ENCODE measurements at regions of chr1 and their contacts with region 1.

Region 1: GRCh38 chr1:9455487-9456234 is 83.6 kb upstream of the SLC25A33 start:
- DNase-seq: peak; percentile 76
- H3K4me3 Mint-ChIP-seq: no peak overlapping the region
- H3K27ac Mint-ChIP-seq: no peak overlapping the region
- H3K4me1 Mint-ChIP-seq: no peaks in the 10 kb centered on the region
- H3K27me3 Mint-ChIP-seq: peaks cover 21% of the 10 kb centered on the region

Region 2: GRCh38 chr1:9292361-9293240 is 163.1 kb before region 1 on chr1 and contains the start of gene SPSB1:
- CTCF ChIA-PET with region 1: interaction called, 122 read pairs
- DNase-seq: peak; percentile 76
- H3K4me3 Mint-ChIP-seq: peak within 1 kb of the TSS; percentile 62
- H3K27ac Mint-ChIP-seq: no peak within 1 kb of the TSS
- H3K4me1 Mint-ChIP-seq: peaks cover 12% of the 10 kb centered on the region
- H3K27me3 Mint-ChIP-seq: peaks cover 22% of the 10 kb centered on the region

Region 3: GRCh38 chr1:9438431-9439073 is 17.1 kb before region 1 on chr1:
- CTCF ChIA-PET with region 1: interaction called, 12 read pairs
- DNase-seq: no peak
- H3K4me3 Mint-ChIP-seq: no peak overlapping the region
- H3K27ac Mint-ChIP-seq: no peak overlapping the region
- H3K4me1 Mint-ChIP-seq: no peaks in the 10 kb centered on the region
- H3K27me3 Mint-ChIP-seq: peaks cover 59% of the 10 kb centered on the region

Region 4: GRCh38 chr1:9629445-9630201 is 174.0 kb after region 1 on chr1:
- CTCF ChIA-PET with region 1: no interaction called
- DNase-seq: peak; percentile 90
- H3K4me3 Mint-ChIP-seq: peak overlapping the region; percentile 87
- H3K27ac Mint-ChIP-seq: peak overlapping the region; percentile 93
- H3K4me1 Mint-ChIP-seq: peaks cover 74% of the 10 kb centered on the region
- H3K27me3 Mint-ChIP-seq: peaks cover 11% of the 10 kb centered on the region

Measured in activated naive CD4-positive, alpha-beta T cell treated with anti-CD3 and anti-CD28 coated beads, Interleukin-2, amount 10 ng/mL, durations not matched to agents 7 days and 5 days (primary cell).